ENCODE measurements at regions of chr14 and their contacts with region 1.

Region 1: DNA sequence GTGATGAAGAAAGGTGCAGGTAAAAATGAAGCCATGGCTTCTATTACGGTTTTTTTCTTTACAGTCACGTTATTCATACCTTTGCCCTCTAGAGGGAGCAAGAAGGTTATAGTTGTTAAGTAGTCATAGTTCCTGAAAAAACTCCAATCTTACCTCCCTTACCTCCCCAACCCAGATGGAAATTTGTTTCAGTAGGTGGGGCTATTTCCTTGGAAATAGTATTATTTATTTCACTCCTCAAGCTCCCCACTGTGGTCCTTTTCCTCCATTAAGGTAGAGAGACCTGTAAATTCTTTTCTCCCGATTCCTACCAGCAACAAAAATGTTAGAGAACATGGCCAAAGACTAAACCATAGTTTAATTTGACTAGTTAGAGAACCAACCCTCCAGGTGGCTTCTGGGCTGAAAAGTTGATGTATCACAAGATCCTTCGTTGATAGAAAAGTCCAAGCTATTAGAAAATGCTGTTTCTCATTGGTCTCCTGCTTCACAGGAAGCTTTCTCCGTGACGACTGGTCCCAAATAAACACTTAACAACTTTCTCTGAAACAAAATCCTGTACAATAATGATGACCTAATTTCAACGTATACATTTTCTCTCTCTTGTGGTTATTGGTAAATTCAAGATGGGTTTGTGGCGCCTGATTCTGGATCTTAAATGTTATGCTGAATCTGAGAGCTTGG is 43.5 kb downstream of the TMX1 start:
- DNase-seq: peak; percentile 98
- ATAC-seq: peak; percentile 96
- H3K4me3 ChIP-seq: no peak overlapping the region
- H3K27ac ChIP-seq: peak overlapping the region; percentile 2; the same call in 1 of the 2 replicates
- H3K4me1 ChIP-seq: peaks cover 10% of the 10 kb centered on the region
- H3K27me3 ChIP-seq: no peaks in the 10 kb centered on the region
- CTCF ChIP-seq: peak; percentile 99

Region 2: DNA sequence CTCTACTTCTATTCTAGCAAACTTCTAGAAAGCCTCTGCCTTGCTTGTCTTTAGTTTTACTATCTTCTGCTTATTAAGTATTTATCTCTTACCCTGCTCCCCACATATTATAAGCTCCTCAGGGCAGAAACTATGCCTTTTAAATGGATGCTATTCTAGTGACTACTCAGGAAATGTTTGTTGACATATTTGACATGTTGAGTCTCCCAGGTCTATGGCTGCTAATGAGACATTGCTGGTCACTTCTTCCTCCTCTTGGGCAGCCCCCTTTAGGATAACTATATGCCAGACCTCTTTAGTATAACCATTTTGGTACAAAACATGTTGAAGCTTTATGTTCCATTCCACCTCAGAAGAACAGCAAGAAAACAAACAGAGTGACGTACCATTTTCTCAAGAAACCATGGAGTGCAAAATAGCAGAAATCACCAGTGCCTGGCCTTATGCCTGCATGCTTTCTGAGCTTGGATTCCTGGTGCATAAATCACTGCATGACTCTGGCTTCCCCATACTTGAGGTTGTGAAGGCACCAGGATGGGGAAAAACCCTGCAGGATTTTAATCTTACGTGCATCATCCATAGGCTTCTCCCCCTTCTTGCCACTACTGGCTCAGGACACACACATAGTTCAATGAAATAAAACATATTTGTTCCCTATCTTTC is 159.1 kb after region 1 on chr14:
- CTCF ChIA-PET with region 1: interaction called, 5 read pairs
- POLR2A ChIA-PET with region 1: no interaction called
- intact Hi-C with region 1: loop called (anchors 1 kb)
- DNase-seq: peak; percentile 97
- ATAC-seq: peak; percentile 91
- H3K4me3 ChIP-seq: peak overlapping the region; percentile 35
- H3K27ac ChIP-seq: peak overlapping the region; percentile 95
- H3K4me1 ChIP-seq: peaks cover 45% of the 10 kb centered on the region
- H3K27me3 ChIP-seq: no peaks in the 10 kb centered on the region
- CTCF ChIP-seq: no peak

Region 3: GRCh38 chr14:51547260-51547659 is 263.7 kb after region 1 on chr14:
- CTCF ChIA-PET with region 1: no interaction called
- POLR2A ChIA-PET with region 1: no interaction called
- intact Hi-C with region 1: loop called (anchors 2 kb)
- DNase-seq: peak; percentile 99
- ATAC-seq: peak; percentile 93
- H3K4me3 ChIP-seq: peak overlapping the region; percentile 9; the same call in 1 of the 2 replicates
- H3K27ac ChIP-seq: peak overlapping the region; percentile 91
- H3K4me1 ChIP-seq: peaks cover 54% of the 10 kb centered on the region
- H3K27me3 ChIP-seq: no peaks in the 10 kb centered on the region
- CTCF ChIP-seq: no peak

Region 4: DNA sequence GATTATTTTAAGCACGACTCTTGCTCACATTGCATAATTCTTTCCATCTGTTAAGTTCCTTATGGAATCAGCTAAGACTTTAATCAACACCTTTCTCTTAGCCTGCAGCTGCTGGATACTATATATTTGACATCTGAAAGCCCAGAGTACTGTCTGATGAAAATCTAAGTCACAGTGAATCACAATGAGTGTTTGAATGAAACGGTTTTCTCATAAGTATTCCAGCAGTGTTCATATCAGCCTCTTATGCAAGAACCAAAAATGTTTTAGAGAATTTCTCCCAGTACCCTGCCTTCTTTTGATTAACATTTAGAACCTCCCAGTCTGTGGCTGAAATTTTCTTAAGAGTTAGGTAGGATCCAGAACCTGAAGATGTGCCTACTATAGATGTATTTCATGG is 423.8 kb after region 1 on chr14:
- CTCF ChIA-PET with region 1: no interaction called
- POLR2A ChIA-PET with region 1: no interaction called
- intact Hi-C with region 1: loop called (anchors 2 kb)
- DNase-seq: no peak
- ATAC-seq: no peak
- H3K4me3 ChIP-seq: no peak overlapping the region
- H3K27ac ChIP-seq: no peak overlapping the region
- H3K4me1 ChIP-seq: peaks cover 8% of the 10 kb centered on the region
- H3K27me3 ChIP-seq: no peaks in the 10 kb centered on the region
- CTCF ChIP-seq: no peak

Region 5: GRCh38 chr14:51979088-51979709 is 695.7 kb after region 1 on chr14:
- CTCF ChIA-PET with region 1: no interaction called
- POLR2A ChIA-PET with region 1: no interaction called
- intact Hi-C with region 1: loop called (anchors 1 kb)
- DNase-seq: peak; percentile 93
- ATAC-seq: peak; percentile 96
- H3K4me3 ChIP-seq: no peak overlapping the region
- H3K27ac ChIP-seq: no peak overlapping the region
- H3K4me1 ChIP-seq: no peaks in the 10 kb centered on the region
- H3K27me3 ChIP-seq: no peaks in the 10 kb centered on the region
- CTCF ChIP-seq: peak; percentile 97